ENCODE measurements at regions of chr9 and their contacts with region 1.

Region 1: GRCh38 chr9:34536685-34537084 is 13.9 kb upstream of the ENHO start:
- DNase-seq: no peak
- H3K4me3 ChIP-seq: no peak overlapping the region
- H3K27ac ChIP-seq: no peak overlapping the region
- H3K27me3 ChIP-seq: peaks cover 31% of the 10 kb centered on the region
- CTCF ChIP-seq: no peak

Region 2: DNA sequence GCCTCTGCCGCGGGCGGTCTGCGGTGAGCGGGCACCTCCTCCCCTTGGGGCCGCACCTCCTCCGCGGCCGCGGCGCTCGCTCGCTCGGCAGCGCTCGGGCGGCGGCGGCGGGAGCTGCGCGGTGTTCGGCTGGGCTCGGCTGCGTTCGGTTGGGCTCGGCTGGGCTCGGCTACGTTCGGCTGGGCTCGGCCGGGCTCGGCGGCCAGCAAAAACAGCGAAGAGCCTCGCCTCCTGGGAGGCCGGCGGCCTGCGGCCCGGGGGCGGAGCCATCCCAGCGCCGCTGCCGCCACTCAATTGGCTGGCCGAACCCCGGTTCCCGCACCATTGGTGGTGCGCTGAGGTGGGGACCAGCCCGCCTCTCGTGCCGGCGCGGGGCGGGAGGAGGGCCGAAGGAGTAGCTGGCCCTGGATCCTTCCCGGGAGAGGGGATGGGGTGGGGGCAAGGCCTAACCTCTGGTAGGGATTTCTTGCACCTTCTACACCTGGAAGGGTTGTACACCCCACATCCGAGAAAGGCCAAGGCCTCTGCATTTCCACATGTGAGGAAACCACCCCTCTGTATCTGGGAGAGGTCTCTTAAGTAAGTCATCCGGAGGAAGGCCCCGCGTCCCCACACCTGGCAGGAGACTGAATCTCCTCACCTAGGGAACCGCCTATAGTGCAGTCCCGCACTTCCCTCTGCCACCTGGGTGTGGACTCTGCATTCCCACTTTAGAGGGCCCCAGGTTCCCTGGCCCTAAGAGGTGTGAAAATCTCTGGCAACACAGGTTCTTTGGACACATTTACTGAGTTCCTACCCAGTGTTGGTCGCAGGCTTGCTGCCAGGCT is 13.5 kb before region 1 on chr9 and contains the start of gene ENHO:
- CTCF ChIA-PET with region 1: no interaction called
- POLR2A ChIA-PET with region 1: no interaction called
- DNase-seq: peak; percentile 59
- H3K4me3 ChIP-seq: peak within 1 kb of the TSS; percentile 41
- H3K27ac ChIP-seq: no peak within 1 kb of the TSS
- H3K27me3 ChIP-seq: peaks cover 22% of the 10 kb centered on the region
- CTCF ChIP-seq: no peak
- polyA plus RNA-seq, gene ENHO: 0.09 TPM in 1 of 2 replicates, not detected in the other

Region 3: DNA sequence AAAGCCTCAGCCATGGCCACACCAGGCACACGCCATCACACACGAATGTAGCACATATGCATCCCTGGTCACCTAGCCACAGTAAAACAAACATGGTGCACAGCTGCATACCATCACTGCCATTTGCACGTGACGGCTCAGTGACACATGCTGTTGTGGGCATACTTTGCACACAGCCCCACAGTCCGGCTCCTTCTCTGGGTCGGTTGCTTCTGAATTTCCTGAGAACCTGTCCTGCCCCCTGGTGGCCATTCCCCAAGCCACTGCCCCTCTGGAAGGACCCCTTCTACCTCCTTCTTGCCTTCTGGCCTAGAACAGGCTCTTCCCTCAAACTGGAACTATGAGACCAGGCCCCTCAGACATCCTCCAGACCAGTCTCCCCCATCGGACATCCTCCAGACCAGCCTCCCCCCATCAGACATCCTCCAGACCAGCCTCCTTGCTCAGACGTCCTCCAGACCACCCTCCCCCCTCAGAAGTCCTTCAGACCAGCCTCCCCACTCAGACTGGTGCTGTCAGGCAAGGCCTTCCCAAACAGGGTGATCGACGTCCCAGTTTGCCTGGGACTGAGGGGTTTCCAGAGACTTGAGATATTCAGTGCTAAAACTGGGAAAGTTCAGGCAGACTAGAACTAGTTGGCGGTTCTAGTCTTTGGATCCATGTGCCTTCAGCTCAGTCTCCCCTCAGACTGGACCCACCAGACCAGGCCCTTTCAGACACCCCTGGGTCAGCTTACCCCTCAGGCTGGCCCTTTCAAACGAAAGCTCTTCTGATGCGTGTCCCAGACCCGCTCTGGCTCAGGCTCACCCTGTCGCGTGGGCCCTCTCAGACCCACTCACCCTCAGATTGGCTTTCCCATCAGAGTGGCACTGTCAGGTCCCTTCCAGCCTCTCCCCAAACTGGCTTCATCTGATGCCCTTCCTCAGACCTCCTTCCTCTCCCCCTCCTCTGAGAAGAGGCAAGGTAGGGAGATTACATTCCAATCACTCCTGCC is 10.4 kb after region 1 on chr9:
- CTCF ChIA-PET with region 1: interaction called, 10 read pairs
- POLR2A ChIA-PET with region 1: no interaction called
- DNase-seq: peak; percentile 10
- H3K4me3 ChIP-seq: no peak overlapping the region
- H3K27ac ChIP-seq: no peak overlapping the region
- H3K27me3 ChIP-seq: peaks cover 10% of the 10 kb centered on the region
- CTCF ChIP-seq: peak; percentile 63